H1 (cell line): ENCODE measurements at regions of chr16 and their contacts with region 1.

Region 1: GRCh38 chr16:19991614-19992013 is 82.1 kb downstream of the GPR139 start:
- DNase-seq: peak in 1 of 2 experiments; percentile 49
- H3K4me3 ChIP-seq: no peak overlapping the region
- H3K27ac ChIP-seq: no peak overlapping the region
- H3K4me1 ChIP-seq: no peaks in the 10 kb centered on the region; a peak in 1 of 7 replicates
- H3K27me3 ChIP-seq: no peaks in the 10 kb centered on the region
- CTCF ChIP-seq: peak; percentile 3 to 50 (median 31); a peak in 3 of 4 replicates
- EP300 ChIP-seq: no peak
- POLR2A ChIP-seq: no peak
- RAD21 ChIP-seq: peak; percentile 29 to 53; a peak in 3 of 4 replicates

Region 2: GRCh38 chr16:19888834-19889233 is 102.8 kb before region 1 on chr16:
- CTCF ChIA-PET with region 1: no interaction called
- POLR2A ChIA-PET with region 1: no interaction called
- DNase-seq: no peak
- H3K4me3 ChIP-seq: no peak overlapping the region
- H3K27ac ChIP-seq: no peak overlapping the region
- H3K4me1 ChIP-seq: peaks cover 0 to 6% (median 3%) of the 10 kb centered on the region in 4 experiments; a peak in 6 of 7 replicates
- H3K27me3 ChIP-seq: peaks cover 0 to 11% (median 7%) of the 10 kb centered on the region in 4 experiments; a peak in 5 of 7 replicates
- CTCF ChIP-seq: no peak
- EP300 ChIP-seq: no peak
- POLR2A ChIP-seq: no peak
- RAD21 ChIP-seq: no peak

Region 3: DNA sequence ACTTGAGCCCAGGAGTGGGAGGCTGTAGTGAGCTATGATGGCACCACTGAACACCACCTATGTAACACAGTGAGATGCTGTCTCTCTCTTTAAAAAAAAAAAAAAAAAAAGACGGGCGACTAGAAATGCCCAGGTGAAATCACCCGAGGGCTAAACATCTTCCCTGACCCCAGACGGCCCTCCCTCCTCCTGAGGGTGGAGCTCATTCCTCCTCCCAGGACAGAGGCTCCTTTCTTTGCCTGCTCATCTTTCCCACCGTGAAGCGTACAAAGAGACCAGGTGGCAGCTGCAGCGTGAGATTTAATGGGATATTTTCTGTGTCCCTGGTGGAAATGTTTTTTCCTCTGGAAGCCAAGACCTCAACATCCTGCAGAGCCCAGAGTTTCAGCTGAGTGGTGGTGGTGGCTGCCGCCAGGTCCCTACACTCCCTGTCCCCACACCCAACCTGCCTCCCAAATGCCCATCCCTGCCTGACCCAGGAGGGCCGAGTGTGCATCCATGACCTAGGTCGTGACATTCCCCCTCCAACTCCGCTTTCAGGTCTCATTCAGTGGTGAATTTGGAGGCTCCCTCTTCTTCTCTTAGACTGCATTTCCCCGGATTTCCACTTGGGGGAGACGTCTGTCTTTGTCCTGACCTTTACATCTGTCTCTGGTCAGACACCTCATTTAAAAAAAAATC is 92.5 kb before region 1 on chr16:
- CTCF ChIA-PET with region 1: interaction called, 10 read pairs
- POLR2A ChIA-PET with region 1: no interaction called
- DNase-seq: peak in 1 of 2 experiments; percentile 86
- H3K4me3 ChIP-seq: no peak overlapping the region
- H3K27ac ChIP-seq: no peak overlapping the region; the same call in 1 of the 2 replicates
- H3K4me1 ChIP-seq: peaks cover 0 to 7% (median 4%) of the 10 kb centered on the region in 4 experiments; a peak in 5 of 7 replicates
- H3K27me3 ChIP-seq: no peaks in the 10 kb centered on the region
- CTCF ChIP-seq: peak; percentile 27 to 86 (median 73)
- EP300 ChIP-seq: no peak
- POLR2A ChIP-seq: no peak
- RAD21 ChIP-seq: peak; percentile 94 to 95

Region 4: GRCh38 chr16:20004932-20005331 is 13.3 kb after region 1 on chr16:
- CTCF ChIA-PET with region 1: interaction called, 23 read pairs
- POLR2A ChIA-PET with region 1: interaction called, 3 read pairs
- DNase-seq: peak in 1 of 2 experiments; percentile 36
- H3K4me3 ChIP-seq: no peak overlapping the region
- H3K27ac ChIP-seq: no peak overlapping the region
- H3K4me1 ChIP-seq: peaks cover 0 to 5% (median 2%) of the 10 kb centered on the region in 4 experiments; a peak in 4 of 7 replicates
- H3K27me3 ChIP-seq: no peaks in the 10 kb centered on the region
- CTCF ChIP-seq: peak; percentile 29 to 73 (median 60)
- EP300 ChIP-seq: no peak
- POLR2A ChIP-seq: no peak
- RAD21 ChIP-seq: peak; percentile 44 to 69; a peak in 3 of 4 replicates